ENCODE measurements at regions of chr6 and their contacts with region 1.

Region 1: GRCh38 chr6:144582939-144583613 is 297.9 kb downstream of the UTRN start:
- DNase-seq: no peak
- ATAC-seq: peak; percentile 22; the same call in 1 of the 2 replicates
- H3K4me3 ChIP-seq: peak overlapping the region; percentile 53
- H3K27ac ChIP-seq: no peak overlapping the region
- H3K4me1 ChIP-seq: no peaks in the 10 kb centered on the region
- H3K27me3 ChIP-seq: no peaks in the 10 kb centered on the region
- CTCF ChIP-seq: no peak

Region 2: DNA sequence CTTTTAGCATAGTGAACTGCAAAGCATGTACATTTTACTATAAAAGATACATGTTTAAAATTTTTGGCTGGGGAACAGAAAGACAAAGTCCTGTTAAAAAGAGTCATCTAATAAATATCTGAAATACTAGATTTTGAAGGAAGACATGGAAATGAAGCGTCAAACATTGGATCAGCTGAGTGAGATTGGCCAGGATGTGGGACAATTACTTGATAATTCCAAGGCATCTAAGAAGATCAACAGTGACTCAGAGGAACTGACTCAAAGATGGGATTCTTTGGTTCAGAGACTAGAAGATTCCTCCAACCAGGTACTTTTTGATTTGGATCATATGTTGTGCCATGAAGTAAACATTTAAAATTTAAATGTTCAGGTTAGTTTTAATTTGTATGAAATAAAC is 135.6 kb before region 1 on chr6:
- CTCF ChIA-PET with region 1: no interaction called
- POLR2A ChIA-PET with region 1: no interaction called
- intact Hi-C with region 1: no loop called
- DNase-seq: peak; percentile 88
- ATAC-seq: peak; percentile 92
- H3K4me3 ChIP-seq: no peak overlapping the region
- H3K27ac ChIP-seq: peak overlapping the region; percentile 69
- H3K4me1 ChIP-seq: peaks cover 31% of the 10 kb centered on the region
- H3K27me3 ChIP-seq: no peaks in the 10 kb centered on the region
- CTCF ChIP-seq: no peak

Region 3: GRCh38 chr6:144460327-144461095 is 122.6 kb before region 1 on chr6:
- CTCF ChIA-PET with region 1: no interaction called
- POLR2A ChIA-PET with region 1: no interaction called
- intact Hi-C with region 1: no loop called
- DNase-seq: no peak
- ATAC-seq: no peak
- H3K4me3 ChIP-seq: no peak overlapping the region
- H3K27ac ChIP-seq: no peak overlapping the region
- H3K4me1 ChIP-seq: no peaks in the 10 kb centered on the region
- H3K27me3 ChIP-seq: no peaks in the 10 kb centered on the region
- CTCF ChIP-seq: no peak

Region 4: DNA sequence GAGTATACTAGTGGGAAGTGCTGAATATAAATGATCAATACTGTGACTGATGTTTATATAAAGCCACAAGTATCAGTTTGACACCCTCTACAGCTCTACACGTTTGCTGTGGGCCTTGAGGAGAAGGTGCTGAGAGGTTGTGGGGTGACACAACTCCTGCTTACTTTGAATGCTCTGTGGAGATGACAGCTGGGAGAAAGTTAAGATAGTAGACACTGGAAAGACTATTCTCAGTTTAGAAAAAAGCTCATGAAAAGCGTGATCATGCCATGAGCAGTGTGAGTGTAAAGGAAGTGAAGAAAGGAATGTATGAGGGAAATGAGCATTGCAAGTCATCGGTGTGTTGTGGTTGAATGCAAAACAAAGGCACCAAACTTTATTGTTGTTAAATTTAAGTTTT is 82.2 kb before region 1 on chr6:
- CTCF ChIA-PET with region 1: no interaction called
- POLR2A ChIA-PET with region 1: no interaction called
- intact Hi-C with region 1: no loop called
- DNase-seq: no peak
- ATAC-seq: no peak
- H3K4me3 ChIP-seq: no peak overlapping the region
- H3K27ac ChIP-seq: no peak overlapping the region
- H3K4me1 ChIP-seq: no peaks in the 10 kb centered on the region
- H3K27me3 ChIP-seq: no peaks in the 10 kb centered on the region
- CTCF ChIP-seq: no peak

Region 5: GRCh38 chr6:144797881-144798595 is 215.0 kb after region 1 on chr6:
- CTCF ChIA-PET with region 1: no interaction called
- POLR2A ChIA-PET with region 1: no interaction called
- intact Hi-C with region 1: loop called (anchors 1 kb)
- DNase-seq: peak; percentile 95
- ATAC-seq: peak; percentile 87
- H3K4me3 ChIP-seq: peak overlapping the region; percentile 16; the same call in 1 of the 2 replicates
- H3K27ac ChIP-seq: peak overlapping the region; percentile 83
- H3K4me1 ChIP-seq: peaks cover 27% of the 10 kb centered on the region
- H3K27me3 ChIP-seq: no peaks in the 10 kb centered on the region
- CTCF ChIP-seq: no peak

Region 6: GRCh38 chr6:144835322-144835973 is 252.4 kb after region 1 on chr6:
- CTCF ChIA-PET with region 1: no interaction called
- POLR2A ChIA-PET with region 1: no interaction called
- intact Hi-C with region 1: no loop called
- DNase-seq: no peak
- ATAC-seq: no peak
- H3K4me3 ChIP-seq: no peak overlapping the region
- H3K27ac ChIP-seq: no peak overlapping the region
- H3K4me1 ChIP-seq: no peaks in the 10 kb centered on the region
- H3K27me3 ChIP-seq: no peaks in the 10 kb centered on the region
- CTCF ChIP-seq: no peak

Region 7: GRCh38 chr6:145028144-145028818 is 445.2 kb after region 1 on chr6:
- CTCF ChIA-PET with region 1: no interaction called
- POLR2A ChIA-PET with region 1: no interaction called
- intact Hi-C with region 1: loop called (anchors 2 kb)
- DNase-seq: peak; percentile 75
- ATAC-seq: peak; percentile 80
- H3K4me3 ChIP-seq: no peak overlapping the region
- H3K27ac ChIP-seq: no peak overlapping the region
- H3K4me1 ChIP-seq: peaks cover 6% of the 10 kb centered on the region
- H3K27me3 ChIP-seq: no peaks in the 10 kb centered on the region
- CTCF ChIP-seq: peak; percentile 76

Region 8: DNA sequence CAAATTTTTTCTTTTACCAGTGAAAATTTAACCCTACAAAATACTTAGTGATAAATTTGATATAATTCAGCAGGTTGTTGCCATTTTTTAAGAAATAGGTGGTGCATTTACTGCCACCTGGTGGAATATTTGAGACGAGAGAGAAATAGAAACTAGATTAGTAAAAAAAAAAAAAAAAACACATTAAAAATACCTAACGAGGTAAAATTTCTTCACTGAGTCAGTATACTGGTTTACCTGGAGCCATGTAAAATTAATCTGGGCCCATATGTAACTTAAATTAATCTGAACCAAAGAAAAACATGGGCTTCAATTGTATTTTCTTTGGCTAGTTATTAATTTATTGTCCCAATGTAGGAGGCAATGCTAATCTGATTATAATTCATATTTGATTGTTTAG is 631.5 kb after region 1 on chr6:
- CTCF ChIA-PET with region 1: no interaction called
- POLR2A ChIA-PET with region 1: no interaction called
- intact Hi-C with region 1: loop called (anchors 2 kb)
- DNase-seq: peak; percentile 53
- ATAC-seq: no peak
- H3K4me3 ChIP-seq: no peak overlapping the region
- H3K27ac ChIP-seq: no peak overlapping the region
- H3K4me1 ChIP-seq: no peaks in the 10 kb centered on the region
- H3K27me3 ChIP-seq: no peaks in the 10 kb centered on the region
- CTCF ChIP-seq: peak; percentile 66; the same call in 1 of the 2 replicates

Region 9: GRCh38 chr6:145704143-145704781 is 1121.2 kb after region 1 on chr6:
- CTCF ChIA-PET with region 1: no interaction called
- POLR2A ChIA-PET with region 1: no interaction called
- intact Hi-C with region 1: loop called (anchors 10 kb)
- DNase-seq: peak; percentile 45
- ATAC-seq: no peak
- H3K4me3 ChIP-seq: no peak overlapping the region
- H3K27ac ChIP-seq: no peak overlapping the region
- H3K4me1 ChIP-seq: peaks cover 18% of the 10 kb centered on the region
- H3K27me3 ChIP-seq: no peaks in the 10 kb centered on the region
- CTCF ChIP-seq: peak; percentile 52

Measured in PC-3 (cell line).